Activated CD4-positive, alpha-beta T cell treated with anti-CD3 and anti-CD28 coated beads for 36 hours (primary cell): ENCODE measurements at regions of chr7 and their contacts with region 1.

Region 1: GRCh38 chr7:73718905-73719805 is at the start of gene STX1A:
- DNase-seq: peak; percentile 85
- ATAC-seq: peak; percentile 59
- H3K4me3 Mint-ChIP-seq: peak within 1 kb of the TSS; percentile 75
- H3K27ac Mint-ChIP-seq: peak within 1 kb of the TSS; percentile 66
- H3K4me1 Mint-ChIP-seq: peaks cover 34% of the 10 kb centered on the region
- H3K27me3 Mint-ChIP-seq: peaks cover 4% of the 10 kb centered on the region
- total RNA-seq, gene STX1A: 16.6 to 16.8 TPM

Region 2: GRCh38 chr7:73522105-73522872 is 196.9 kb before region 1 on chr7 and contains the start of gene BAZ1B:
- CTCF ChIA-PET with region 1: no interaction called
- POLR2A ChIA-PET with region 1: interaction called, 3 read pairs
- intact Hi-C with region 1: loop called (anchors 1 kb)
- DNase-seq: peak; percentile 99
- ATAC-seq: peak; percentile 95
- H3K4me3 Mint-ChIP-seq: peak within 1 kb of the TSS; percentile 99
- H3K27ac Mint-ChIP-seq: peak within 1 kb of the TSS; percentile 98
- H3K4me1 Mint-ChIP-seq: peaks cover 53% of the 10 kb centered on the region
- H3K27me3 Mint-ChIP-seq: no peaks in the 10 kb centered on the region
- total RNA-seq, gene BAZ1B: 90.2 to 98.6 TPM

Region 3: GRCh38 chr7:73623798-73624668 is 95.1 kb before region 1 on chr7 and contains the start of gene MLXIPL:
- CTCF ChIA-PET with region 1: interaction called, 3 read pairs
- POLR2A ChIA-PET with region 1: no interaction called
- intact Hi-C with region 1: loop called in 1 of 2 experiments (anchors 5 kb)
- DNase-seq: peak; percentile 85
- ATAC-seq: peak; percentile 95
- H3K4me3 Mint-ChIP-seq: no peak within 1 kb of the TSS
- H3K27ac Mint-ChIP-seq: no peak within 1 kb of the TSS
- H3K4me1 Mint-ChIP-seq: peaks cover 8% of the 10 kb centered on the region
- H3K27me3 Mint-ChIP-seq: peaks cover 43% of the 10 kb centered on the region
- total RNA-seq, gene MLXIPL: not detected

Region 4: DNA sequence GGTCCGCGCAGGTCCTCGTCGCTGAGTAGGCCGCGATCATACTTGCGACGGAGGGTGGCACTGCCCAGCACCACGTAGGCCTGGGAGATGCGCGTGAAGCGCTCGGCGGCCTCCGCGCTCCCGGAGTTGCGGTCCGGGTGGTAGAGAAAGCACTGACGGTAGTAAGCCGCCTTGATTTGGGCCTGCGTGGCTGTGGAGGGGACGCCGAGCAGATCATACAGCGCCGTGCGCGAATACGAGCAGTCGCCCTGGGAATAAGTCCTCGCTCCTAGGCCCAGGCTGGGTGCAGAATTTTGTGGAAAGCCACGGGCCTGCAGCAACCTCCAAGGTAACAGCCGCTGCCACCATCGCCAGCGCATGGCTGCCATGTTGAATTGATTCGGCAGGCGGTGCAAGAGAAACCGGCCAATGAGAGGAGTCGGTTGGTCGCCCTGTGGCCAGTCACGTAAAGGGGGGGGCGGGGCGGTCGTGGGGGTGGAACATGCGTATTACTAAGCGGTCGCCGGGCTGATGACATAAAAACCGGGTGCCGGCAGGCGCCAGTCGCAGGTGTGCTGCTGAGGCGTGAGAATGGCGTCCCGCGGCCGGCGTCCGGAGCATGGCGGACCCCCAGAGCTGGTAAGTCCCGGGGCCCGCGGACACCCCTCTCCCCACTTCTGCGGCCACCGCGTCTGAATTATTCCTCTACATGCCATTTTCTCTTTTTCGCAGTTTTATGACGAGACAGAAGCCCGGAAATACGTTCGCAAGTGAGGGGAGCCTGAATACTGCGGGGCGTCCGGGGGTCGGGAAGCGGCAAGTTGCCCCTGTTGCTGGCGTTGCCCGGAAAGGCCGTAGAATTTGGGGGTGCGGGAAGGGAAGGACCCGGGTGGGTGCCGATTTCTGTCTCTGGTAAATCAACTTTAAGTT is 35.8 kb before region 1 on chr7 and contains the starts of genes BUD23 and DNAJC30:
- CTCF ChIA-PET with region 1: no interaction called
- POLR2A ChIA-PET with region 1: interaction called, 3 read pairs
- intact Hi-C with region 1: loop called (anchors 1 to 2 kb)
- DNase-seq: peak; percentile 99
- ATAC-seq: peak; percentile 98
- H3K4me3 Mint-ChIP-seq: peak within 1 kb of the TSS; percentile 89
- H3K27ac Mint-ChIP-seq: peak within 1 kb of the TSS; percentile 96
- H3K4me1 Mint-ChIP-seq: peaks cover 41% of the 10 kb centered on the region
- H3K27me3 Mint-ChIP-seq: no peaks in the 10 kb centered on the region
- total RNA-seq, gene BUD23: 71.4 to 95.5 TPM
- total RNA-seq, gene DNAJC30: 6.9 to 7.8 TPM

Region 5: GRCh38 chr7:73707142-73707595 is 12.0 kb before region 1 on chr7:
- CTCF ChIA-PET with region 1: interaction called, 21 read pairs
- POLR2A ChIA-PET with region 1: interaction called, 17 read pairs
- intact Hi-C with region 1: loop called (anchors 1 to 2 kb)
- DNase-seq: peak; percentile 43
- ATAC-seq: no peak
- H3K4me3 Mint-ChIP-seq: no peak overlapping the region
- H3K27ac Mint-ChIP-seq: no peak overlapping the region
- H3K4me1 Mint-ChIP-seq: peaks cover 18% of the 10 kb centered on the region
- H3K27me3 Mint-ChIP-seq: no peaks in the 10 kb centered on the region

Region 6: DNA sequence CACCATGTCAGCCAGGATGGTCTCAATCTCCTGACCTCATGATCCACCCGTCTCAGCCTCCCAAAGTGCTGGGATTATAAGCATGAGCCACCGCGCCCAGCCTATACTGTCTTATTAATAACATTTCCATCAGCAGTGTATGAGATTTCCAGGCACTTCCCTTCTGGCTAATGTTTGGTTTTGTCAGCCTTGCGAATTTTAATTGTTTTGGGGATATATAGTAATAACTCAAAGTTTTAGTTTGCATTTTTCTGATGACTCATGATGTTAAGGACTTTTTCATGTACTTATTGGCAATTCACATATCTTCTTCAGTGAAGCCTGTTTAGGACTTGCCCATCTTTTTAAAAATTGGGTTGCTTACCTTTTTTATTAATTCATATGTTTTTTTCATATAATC is 217.8 kb after region 1 on chr7:
- CTCF ChIA-PET with region 1: no interaction called
- POLR2A ChIA-PET with region 1: no interaction called
- intact Hi-C with region 1: no loop called
- DNase-seq: no peak
- ATAC-seq: no peak
- H3K4me3 Mint-ChIP-seq: no peak overlapping the region
- H3K27ac Mint-ChIP-seq: no peak overlapping the region
- H3K4me1 Mint-ChIP-seq: no peaks in the 10 kb centered on the region
- H3K27me3 Mint-ChIP-seq: peaks cover 12% of the 10 kb centered on the region